ENCODE measurements at regions of chr5 and their contacts with region 1.

Region 1: DNA sequence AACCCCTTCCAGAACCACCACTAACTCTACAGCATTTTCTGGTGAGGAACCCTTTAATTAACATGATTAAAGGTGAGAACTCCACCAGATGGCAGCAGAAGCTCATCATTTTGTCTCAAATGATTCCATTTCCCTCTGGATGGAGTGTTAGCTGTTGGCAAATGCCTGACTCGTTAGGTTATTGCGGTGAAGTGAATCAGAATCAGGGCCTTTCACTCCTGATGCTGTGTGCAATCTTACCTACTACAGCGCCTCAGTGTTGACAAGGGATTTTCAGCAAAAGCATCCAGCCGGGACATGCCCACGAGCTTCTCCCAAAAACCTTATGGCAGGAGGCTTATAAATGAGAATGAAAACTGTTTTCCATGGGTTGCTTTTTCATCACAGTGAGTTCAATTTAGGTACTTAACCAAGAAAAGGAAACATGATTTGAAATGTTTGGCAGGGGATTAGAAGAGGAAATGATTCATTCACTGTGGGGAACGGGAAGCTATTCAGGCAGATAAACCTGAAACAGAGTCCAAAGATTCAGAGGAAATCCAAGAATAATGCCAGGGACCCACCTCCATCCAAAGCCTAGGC is 48.0 kb upstream of the CAST start:
- DNase-seq: peak in 22 of 35 experiments; percentile 1 to 73 (median 23)
- ATAC-seq: no peak
- H3K4me3 ChIP-seq: no peak overlapping the region
- H3K4me3 Mint-ChIP-seq: no peak overlapping the region
- H3K27ac ChIP-seq: no peak overlapping the region
- H3K27ac Mint-ChIP-seq: peak overlapping the region in 1 of 2 donors; percentile 36
- H3K4me1 ChIP-seq: peaks cover 0 to 3% of the 10 kb centered on the region in 2 experiments
- H3K4me1 Mint-ChIP-seq: peaks cover 0 to 6% (median 5%) of the 10 kb centered on the region in 3 donors
- H3K27me3 ChIP-seq: no peaks in the 10 kb centered on the region
- H3K27me3 Mint-ChIP-seq: peaks cover 11 to 19% of the 10 kb centered on the region in 2 donors

Region 2: DNA sequence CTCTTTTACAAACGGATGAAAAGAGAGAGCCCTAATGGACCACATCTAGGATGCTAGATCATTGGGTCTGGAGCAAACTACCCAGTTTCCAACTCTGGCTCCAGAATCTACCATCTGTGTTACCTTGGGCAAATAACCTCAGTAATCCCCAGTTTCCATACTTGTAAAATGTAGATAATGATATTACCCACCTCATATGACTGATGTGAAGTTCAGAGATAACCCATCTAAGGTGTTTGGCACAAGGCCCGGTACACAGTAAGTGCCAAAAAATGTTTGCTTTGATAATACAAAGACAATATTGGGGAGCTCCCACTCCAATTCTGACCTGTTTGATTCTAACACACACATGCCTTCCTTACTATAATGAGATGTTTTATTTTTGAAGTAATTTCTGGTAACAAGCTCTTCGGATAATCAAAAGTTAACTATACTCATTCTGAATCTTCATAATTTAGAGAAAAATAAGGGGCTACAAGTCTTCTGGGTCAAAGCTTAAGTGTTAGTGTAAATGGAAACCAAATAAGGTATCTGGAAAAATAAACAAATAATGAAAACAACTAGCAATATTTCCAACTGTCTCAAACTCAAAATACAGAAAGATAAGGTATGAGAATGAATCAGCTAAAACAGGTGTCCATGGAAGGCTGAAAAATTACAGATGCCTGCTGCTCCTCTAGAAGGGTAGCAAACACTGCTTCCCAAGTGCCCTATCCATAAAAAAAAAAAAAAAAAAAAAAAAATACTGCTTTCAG is 682.9 kb before region 1 on chr5:
- CTCF ChIA-PET with region 1: no interaction called
- POLR2A ChIA-PET with region 1: interaction called in 1 of 2 experiments, 16 read pairs
- DNase-seq: no peak
- ATAC-seq: no peak
- H3K4me3 ChIP-seq: no peak overlapping the region
- H3K4me3 Mint-ChIP-seq: no peak overlapping the region
- H3K27ac ChIP-seq: no peak overlapping the region
- H3K27ac Mint-ChIP-seq: no peak overlapping the region
- H3K4me1 ChIP-seq: no peaks in the 10 kb centered on the region
- H3K4me1 Mint-ChIP-seq: peaks cover 6 to 18% (median 7%) of the 10 kb centered on the region in 3 donors
- H3K27me3 ChIP-seq: no peaks in the 10 kb centered on the region
- H3K27me3 Mint-ChIP-seq: no peaks in the 10 kb centered on the region

Region 3: DNA sequence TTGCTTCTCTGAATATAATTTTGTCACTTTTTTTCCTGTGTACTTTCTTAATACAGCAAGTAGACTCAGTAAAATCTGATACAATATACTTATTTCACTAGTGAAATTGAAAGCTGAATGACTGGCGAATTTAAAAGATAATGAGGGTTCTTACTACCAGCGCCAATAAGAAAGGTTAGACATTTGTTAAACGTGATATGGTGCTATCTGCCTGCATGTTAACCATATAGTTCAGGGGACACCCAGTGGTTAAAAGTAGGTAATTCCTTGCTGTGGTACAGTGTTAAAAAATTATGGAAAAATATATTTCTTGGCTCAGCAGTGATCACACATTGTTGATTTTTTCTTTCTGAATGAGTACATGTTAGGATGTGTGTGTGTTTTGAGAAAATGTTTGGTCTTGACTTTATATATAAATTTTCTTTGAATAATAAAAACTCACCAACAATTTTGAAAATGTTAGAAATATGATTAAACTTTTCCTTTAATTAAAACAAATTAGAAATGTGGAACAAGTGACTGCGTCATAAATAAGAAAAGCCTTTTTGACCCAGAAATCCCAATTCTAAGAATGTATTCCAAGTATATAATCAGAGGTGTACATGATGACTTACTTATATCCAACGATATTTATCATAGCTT is 73.7 kb after region 1 on chr5:
- CTCF ChIA-PET with region 1: interaction called, 13 to 18 read pairs
- POLR2A ChIA-PET with region 1: no interaction called
- DNase-seq: peak in 1 of 35 experiments; percentile 54
- ATAC-seq: peak; percentile 63 to 91 (median 70)
- H3K4me3 ChIP-seq: no peak overlapping the region
- H3K4me3 Mint-ChIP-seq: peak overlapping the region in 1 of 3 donors; percentile 28
- H3K27ac ChIP-seq: no peak overlapping the region
- H3K27ac Mint-ChIP-seq: peak overlapping the region in 1 of 2 donors; percentile 13
- H3K4me1 ChIP-seq: peaks cover 2% of the 10 kb centered on the region in 2 experiments
- H3K4me1 Mint-ChIP-seq: peaks cover 19 to 45% (median 31%) of the 10 kb centered on the region in 3 donors
- H3K27me3 ChIP-seq: no peaks in the 10 kb centered on the region
- H3K27me3 Mint-ChIP-seq: no peaks in the 10 kb centered on the region

Region 4: GRCh38 chr5:96729156-96729555 is 115.0 kb after region 1 on chr5:
- CTCF ChIA-PET with region 1: interaction called, 9 to 15 read pairs
- POLR2A ChIA-PET with region 1: no interaction called
- DNase-seq: peak in 1 of 35 experiments; percentile 16
- ATAC-seq: no peak
- H3K4me3 ChIP-seq: no peak overlapping the region
- H3K4me3 Mint-ChIP-seq: no peak overlapping the region
- H3K27ac ChIP-seq: no peak overlapping the region
- H3K27ac Mint-ChIP-seq: no peak overlapping the region
- H3K4me1 ChIP-seq: peaks cover 4 to 6% of the 10 kb centered on the region in 2 experiments
- H3K4me1 Mint-ChIP-seq: peaks cover 13 to 33% (median 15%) of the 10 kb centered on the region in 3 donors
- H3K27me3 ChIP-seq: no peaks in the 10 kb centered on the region
- H3K27me3 Mint-ChIP-seq: no peaks in the 10 kb centered on the region

Region 5: DNA sequence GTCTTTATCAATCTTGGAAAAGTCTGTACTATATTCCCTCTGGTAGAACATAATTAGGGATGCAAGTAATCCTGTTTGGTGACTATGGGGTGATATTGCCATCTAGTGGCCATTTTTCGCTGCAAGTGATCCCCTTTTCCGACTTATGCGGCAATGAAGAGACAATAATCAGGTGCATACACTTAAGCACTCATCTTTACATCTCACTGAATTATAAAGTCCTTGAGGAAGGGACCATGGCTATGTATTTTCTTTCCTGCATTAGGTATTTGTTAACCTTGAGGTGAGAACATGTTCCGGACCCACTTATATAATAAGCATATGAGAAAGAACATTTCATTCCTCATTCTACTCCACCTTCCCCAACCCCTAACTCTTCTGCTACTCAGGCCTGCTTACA is 547.8 kb after region 1 on chr5:
- CTCF ChIA-PET with region 1: interaction called, 3 to 25 read pairs
- POLR2A ChIA-PET with region 1: no interaction called
- DNase-seq: peak in 24 of 35 experiments; percentile 5 to 82 (median 36)
- ATAC-seq: peak in 2 of 4 experiments; percentile 36 to 48
- H3K4me3 ChIP-seq: no peak overlapping the region
- H3K4me3 Mint-ChIP-seq: no peak overlapping the region
- H3K27ac ChIP-seq: no peak overlapping the region
- H3K27ac Mint-ChIP-seq: no peak overlapping the region
- H3K4me1 ChIP-seq: peaks cover 0 to 2% of the 10 kb centered on the region in 2 experiments
- H3K4me1 Mint-ChIP-seq: peaks cover 0 to 11% (median 7%) of the 10 kb centered on the region in 3 donors
- H3K27me3 ChIP-seq: no peaks in the 10 kb centered on the region
- H3K27me3 Mint-ChIP-seq: no peaks in the 10 kb centered on the region